Natural killer cell (primary cell): ENCODE measurements at regions of chr1 and their contacts with region 1.

Region 1: DNA sequence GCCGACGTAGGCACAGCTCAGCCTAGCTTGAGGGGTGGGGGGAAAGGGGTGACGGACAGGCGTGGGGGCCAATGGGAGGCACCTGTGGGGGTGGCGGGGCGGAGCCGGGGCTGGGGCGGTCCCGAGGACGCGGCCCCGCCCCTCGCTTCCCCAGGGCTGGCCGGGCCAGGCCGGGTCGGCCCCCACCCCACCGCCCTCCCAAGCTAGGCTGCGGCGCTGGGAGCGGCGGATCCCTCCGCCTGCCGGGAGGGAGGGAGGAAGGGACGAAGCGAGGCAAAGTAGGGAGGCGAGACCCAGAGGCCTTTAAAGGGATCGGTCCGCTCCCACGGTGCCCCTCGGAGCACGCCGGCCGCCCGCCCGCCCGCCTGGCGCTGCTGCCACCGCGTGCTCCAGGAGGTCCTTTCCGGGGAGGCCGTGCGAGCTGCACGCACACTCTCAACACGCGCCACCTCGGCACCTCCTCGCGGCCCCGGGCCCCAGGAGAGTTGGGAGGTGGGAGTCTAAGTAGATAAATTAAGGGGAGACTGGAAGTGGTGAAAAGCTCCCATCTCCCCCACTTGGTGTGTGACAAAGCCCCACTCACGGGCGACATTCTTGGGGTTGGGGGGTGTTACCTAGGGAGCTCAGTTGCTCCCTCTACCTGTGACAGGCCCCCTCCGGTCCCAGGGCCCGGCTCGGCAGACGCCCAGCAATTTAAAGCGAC is 373 bp upstream of the MEF2D start:
- DNase-seq: peak; percentile 92 to 97
- ATAC-seq: peak; percentile 64 to 87 (median 71)
- H3K4me3 ChIP-seq: peak overlapping the region; percentile 93
- H3K4me3 Mint-ChIP-seq: peak overlapping the region; percentile 89
- H3K27ac ChIP-seq: peak overlapping the region; percentile 98
- H3K27ac Mint-ChIP-seq: peak overlapping the region; percentile 96 to 99
- H3K4me1 ChIP-seq: peaks cover 83% of the 10 kb centered on the region
- H3K4me1 Mint-ChIP-seq: peaks cover 67 to 83% of the 10 kb centered on the region in 2 donors
- H3K27me3 ChIP-seq: no peaks in the 10 kb centered on the region
- H3K27me3 Mint-ChIP-seq: no peaks in the 10 kb centered on the region
- CTCF ChIP-seq: peak; percentile 67

Region 2: DNA sequence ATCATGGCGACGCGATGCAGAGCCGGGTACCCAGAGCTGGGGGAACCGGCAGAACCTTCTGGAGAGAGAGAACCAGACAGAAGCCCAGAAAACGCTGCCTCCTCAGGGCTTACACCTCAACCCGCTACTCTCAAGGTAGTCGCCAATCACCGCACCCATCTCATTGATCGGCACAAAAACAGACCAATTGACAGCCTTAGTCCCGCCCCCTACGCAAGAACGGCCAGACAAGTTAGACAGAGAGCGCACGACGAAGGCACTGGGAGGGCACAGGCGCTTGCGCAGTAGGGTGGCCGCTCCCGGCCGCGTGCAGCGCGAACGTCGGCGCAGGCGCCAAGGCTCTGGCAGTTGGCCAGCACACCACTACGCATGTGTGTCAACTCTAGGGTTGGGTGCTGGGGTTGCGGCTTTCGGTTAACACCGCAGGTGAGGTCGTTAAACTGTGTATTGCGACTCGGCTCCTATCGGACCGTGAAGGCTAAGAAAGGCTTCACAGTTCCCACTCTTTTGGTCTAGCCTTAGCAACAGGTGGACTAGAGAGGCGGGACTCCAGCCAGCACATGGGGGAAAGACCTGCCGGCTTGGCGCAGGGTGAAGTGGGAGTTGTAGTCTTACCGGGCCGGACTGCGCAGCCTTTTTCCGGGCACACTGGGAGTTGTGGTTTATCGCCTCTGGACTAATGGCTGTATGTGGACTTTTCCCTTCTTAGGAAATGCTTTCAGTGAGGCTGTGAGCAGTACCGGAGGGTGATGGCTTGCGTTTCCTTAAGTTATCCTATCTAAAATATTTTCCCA is 162.6 kb before region 1 on chr1 and contains the starts of genes CCT3 and TSACC:
- intact Hi-C with region 1: loop called (anchors 5 kb)
- DNase-seq: peak; percentile 99 to 100
- ATAC-seq: peak; percentile 93 to 98 (median 94)
- H3K4me3 ChIP-seq: peak within 1 kb of the TSS; percentile 84
- H3K4me3 Mint-ChIP-seq: peak within 1 kb of the TSS; percentile 95
- H3K27ac ChIP-seq: peak within 1 kb of the TSS; percentile 88
- H3K27ac Mint-ChIP-seq: peak within 1 kb of the TSS; percentile 95
- H3K4me1 ChIP-seq: peaks cover 18% of the 10 kb centered on the region
- H3K4me1 Mint-ChIP-seq: peaks cover 38 to 41% of the 10 kb centered on the region in 2 donors
- H3K27me3 ChIP-seq: no peaks in the 10 kb centered on the region
- H3K27me3 Mint-ChIP-seq: no peaks in the 10 kb centered on the region
- CTCF ChIP-seq: no peak
- total RNA-seq, gene CCT3: 70.3 to 87.5 (median 79.8) TPM
- total RNA-seq, gene TSACC: not detected

Region 3: GRCh38 chr1:156456622-156457465 is 44.1 kb before region 1 on chr1:
- intact Hi-C with region 1: loop called (anchors 1 kb)
- DNase-seq: peak; percentile 93 to 100
- ATAC-seq: peak; percentile 86 to 97 (median 87)
- H3K4me3 ChIP-seq: peak overlapping the region; percentile 86
- H3K4me3 Mint-ChIP-seq: peak overlapping the region; percentile 95
- H3K27ac ChIP-seq: peak overlapping the region; percentile 98
- H3K27ac Mint-ChIP-seq: peak overlapping the region; percentile 97 to 99
- H3K4me1 ChIP-seq: peaks cover 19% of the 10 kb centered on the region
- H3K4me1 Mint-ChIP-seq: peaks cover 11 to 20% of the 10 kb centered on the region in 2 donors
- H3K27me3 ChIP-seq: no peaks in the 10 kb centered on the region
- H3K27me3 Mint-ChIP-seq: no peaks in the 10 kb centered on the region
- CTCF ChIP-seq: no peak

Region 4: DNA sequence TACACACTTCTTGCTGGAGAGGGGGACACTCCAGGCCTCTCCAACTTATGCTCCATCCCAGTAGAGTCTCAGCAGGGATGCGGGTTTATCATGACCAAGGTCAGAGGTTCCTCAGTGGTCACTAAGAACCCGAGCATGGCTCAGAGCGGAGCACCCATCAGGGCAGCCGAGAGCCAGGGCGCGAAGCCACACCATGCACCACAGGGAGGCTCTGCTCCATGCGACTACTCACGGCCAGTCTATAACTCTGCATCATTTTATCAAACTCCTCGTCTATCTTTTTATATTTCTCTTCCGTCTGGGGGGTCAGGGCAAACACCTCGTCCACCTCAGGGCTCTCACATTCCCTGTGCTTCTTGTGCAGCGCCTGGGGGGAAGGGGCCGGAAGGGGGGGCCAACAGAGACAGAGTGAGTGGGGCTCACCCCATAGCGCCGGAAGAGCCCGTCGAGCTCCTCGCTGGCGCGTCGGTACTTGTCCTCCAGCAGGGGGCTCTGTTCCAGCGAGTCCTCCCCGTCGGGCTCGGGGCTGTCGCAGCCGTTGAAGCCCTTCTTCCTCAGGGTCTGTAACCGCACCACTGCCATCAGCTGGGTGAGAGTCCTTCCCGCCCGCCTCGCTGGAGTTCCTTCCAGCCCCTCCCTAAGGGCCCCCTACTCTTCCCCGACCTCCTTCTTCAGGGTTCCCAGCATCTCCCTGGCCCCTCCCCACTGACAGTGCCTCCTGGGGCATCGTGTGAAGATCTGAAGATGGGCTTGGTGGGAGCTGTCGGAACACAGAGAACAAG is 20.3 kb before region 1 on chr1:
- intact Hi-C with region 1: loop called (anchors 2 kb)
- DNase-seq: peak; percentile 68 to 91
- ATAC-seq: peak; percentile 80 to 89 (median 86)
- H3K4me3 ChIP-seq: no peak overlapping the region
- H3K4me3 Mint-ChIP-seq: peak overlapping the region; percentile 58
- H3K27ac ChIP-seq: peak overlapping the region; percentile 13
- H3K27ac Mint-ChIP-seq: peak overlapping the region; percentile 90 to 93
- H3K4me1 ChIP-seq: peaks cover 34% of the 10 kb centered on the region
- H3K4me1 Mint-ChIP-seq: peaks cover 37 to 61% of the 10 kb centered on the region in 2 donors
- H3K27me3 ChIP-seq: no peaks in the 10 kb centered on the region
- H3K27me3 Mint-ChIP-seq: no peaks in the 10 kb centered on the region
- CTCF ChIP-seq: peak; percentile 82

Region 5: DNA sequence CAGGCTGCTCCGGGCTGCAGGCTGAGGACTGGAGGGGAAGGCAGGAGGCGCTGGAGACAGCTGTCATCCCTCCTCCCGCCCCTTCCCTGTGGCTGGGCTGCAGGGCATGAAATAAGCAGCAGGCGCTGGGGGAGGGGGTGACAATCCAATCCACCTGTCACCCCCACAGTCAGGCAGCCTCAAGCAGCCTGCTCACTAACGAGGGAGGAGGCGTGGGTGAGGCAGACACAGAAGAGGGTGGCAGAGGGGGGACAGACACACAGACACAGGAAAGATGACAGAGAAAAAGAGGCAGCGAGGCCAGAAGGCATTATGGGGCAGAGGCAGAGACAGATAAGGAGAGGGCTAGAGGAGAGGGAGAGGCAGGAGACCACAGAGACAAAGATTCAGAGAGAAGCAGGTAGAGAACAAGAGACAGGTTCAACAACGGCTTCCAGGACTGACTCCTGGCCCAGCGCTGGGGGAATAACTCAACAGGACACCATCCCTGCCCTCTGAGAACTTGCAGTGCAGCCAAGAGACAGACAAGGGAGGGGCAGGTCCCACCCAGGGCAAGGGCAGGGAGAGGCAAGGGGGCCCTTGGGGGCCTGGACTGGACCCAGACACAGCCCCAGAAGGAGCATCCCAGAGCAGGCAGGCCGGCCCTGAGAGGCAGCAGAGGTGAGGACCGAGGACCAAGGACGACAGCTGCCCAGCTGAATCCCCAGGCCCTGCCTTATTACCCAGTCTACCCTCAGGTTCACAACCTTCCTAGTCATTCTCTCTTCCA is 11.6 kb before region 1 on chr1:
- intact Hi-C with region 1: loop called (anchors 1 kb)
- DNase-seq: peak in 1 of 2 donors; percentile 70
- ATAC-seq: peak; percentile 52 to 57 (median 56)
- H3K4me3 ChIP-seq: no peak overlapping the region
- H3K4me3 Mint-ChIP-seq: peak overlapping the region; percentile 87
- H3K27ac ChIP-seq: peak overlapping the region; percentile 77
- H3K27ac Mint-ChIP-seq: peak overlapping the region; percentile 89 to 97
- H3K4me1 ChIP-seq: peaks cover 91% of the 10 kb centered on the region
- H3K4me1 Mint-ChIP-seq: peaks cover 84 to 98% of the 10 kb centered on the region in 2 donors
- H3K27me3 ChIP-seq: no peaks in the 10 kb centered on the region
- H3K27me3 Mint-ChIP-seq: no peaks in the 10 kb centered on the region
- CTCF ChIP-seq: no peak

Region 6: GRCh38 chr1:156524481-156524869 is 23.5 kb after region 1 on chr1:
- intact Hi-C with region 1: loop called (anchors 1 kb)
- DNase-seq: peak in 1 of 2 donors; percentile 67
- ATAC-seq: peak; percentile 81 to 89 (median 82)
- H3K4me3 ChIP-seq: no peak overlapping the region
- H3K4me3 Mint-ChIP-seq: peak overlapping the region; percentile 63
- H3K27ac ChIP-seq: peak overlapping the region; percentile 36
- H3K27ac Mint-ChIP-seq: peak overlapping the region; percentile 58 to 93
- H3K4me1 ChIP-seq: peaks cover 29% of the 10 kb centered on the region
- H3K4me1 Mint-ChIP-seq: peaks cover 33% of the 10 kb centered on the region in 2 donors
- H3K27me3 ChIP-seq: no peaks in the 10 kb centered on the region
- H3K27me3 Mint-ChIP-seq: peaks cover 0 to 2% of the 10 kb centered on the region in 2 donors
- CTCF ChIP-seq: no peak